ENCODE measurements at regions of chr16 and their contacts with region 1.

Region 1: DNA sequence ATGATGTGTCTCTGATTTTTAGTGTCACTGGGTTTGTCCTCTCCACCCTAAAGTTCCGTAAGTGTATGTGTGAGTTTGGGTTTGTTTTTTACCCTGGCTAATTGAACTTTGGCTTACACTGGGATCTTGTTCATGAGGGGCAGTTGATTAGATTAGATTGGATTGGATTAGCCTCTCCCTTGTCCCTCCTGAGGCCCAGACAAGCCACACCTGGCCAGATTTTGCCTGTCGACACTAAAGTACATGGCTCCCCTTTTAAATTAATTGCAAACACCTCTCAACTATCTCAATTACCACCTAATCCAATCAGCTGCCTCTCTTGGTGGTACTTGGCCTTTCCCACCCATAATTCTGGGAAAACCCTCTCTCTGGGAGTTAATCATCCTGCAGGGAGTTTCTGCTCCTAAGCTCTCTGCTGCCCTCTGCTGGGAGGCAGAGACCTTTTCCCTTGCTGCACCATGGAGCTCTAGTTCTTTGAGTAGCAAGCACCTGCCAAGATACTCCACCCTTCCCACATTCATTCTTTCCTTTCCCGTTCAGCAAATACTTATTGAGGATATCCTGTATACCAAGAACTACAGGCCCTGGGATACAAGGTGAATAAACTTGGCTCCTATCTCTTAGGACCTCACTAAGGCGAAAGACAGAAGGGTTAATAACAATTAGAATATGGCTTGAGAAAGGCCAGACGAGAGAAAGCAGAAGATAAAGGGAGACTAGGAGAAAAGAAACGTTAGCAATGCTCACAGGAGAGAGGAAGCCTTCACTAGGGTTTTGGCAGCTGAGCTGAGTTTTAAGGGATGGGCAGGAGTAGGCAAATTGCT is 60.0 kb upstream of the MPHOSPH6 start:
- DNase-seq: peak; percentile 46 to 77
- ATAC-seq: peak in 2 of 3 donors; percentile 65 to 67
- H3K4me3 ChIP-seq: no peak overlapping the region
- H3K4me3 Mint-ChIP-seq: no peak overlapping the region
- H3K27ac ChIP-seq: no peak overlapping the region
- H3K27ac Mint-ChIP-seq: no peak overlapping the region
- H3K4me1 ChIP-seq: no peaks in the 10 kb centered on the region
- H3K4me1 Mint-ChIP-seq: peaks cover 0 to 4% of the 10 kb centered on the region in 2 donors
- H3K27me3 ChIP-seq: no peaks in the 10 kb centered on the region
- H3K27me3 Mint-ChIP-seq: peaks cover 22 to 43% of the 10 kb centered on the region in 2 donors
- CTCF ChIP-seq: peak; percentile 89

Region 2: DNA sequence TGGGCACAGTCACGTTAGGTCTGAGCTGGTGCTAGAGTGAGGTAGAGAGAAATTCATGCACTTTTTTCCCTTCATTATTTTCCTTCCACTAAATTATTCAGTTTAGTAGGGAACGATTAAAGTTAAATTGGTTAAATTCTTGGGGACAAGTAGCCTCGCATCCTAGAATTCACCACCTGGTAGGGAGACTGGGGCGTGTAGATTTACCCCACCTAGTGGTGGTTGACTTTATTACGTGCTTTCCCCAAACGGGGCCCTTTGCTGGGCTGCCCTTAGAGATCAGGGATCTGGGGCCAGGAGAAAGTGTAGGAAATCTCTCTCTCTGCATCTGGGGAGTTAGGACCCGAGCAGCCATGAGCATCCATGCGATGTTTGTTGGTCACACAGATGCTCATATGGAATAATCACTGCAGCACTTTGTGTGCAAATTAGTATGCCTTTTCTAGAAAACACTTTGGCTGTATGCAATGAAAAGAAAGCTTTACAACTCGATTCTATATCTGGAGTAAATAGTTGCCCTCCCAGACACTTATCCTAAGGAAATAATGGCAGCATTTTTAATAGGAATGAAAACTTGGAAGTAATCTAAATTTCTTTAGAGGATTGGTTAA is 343.9 kb before region 1 on chr16:
- intact Hi-C with region 1: loop called (anchors 1 kb)
- DNase-seq: peak in 1 of 2 donors; percentile 52
- ATAC-seq: peak; percentile 62 to 77 (median 73)
- H3K4me3 ChIP-seq: no peak overlapping the region
- H3K4me3 Mint-ChIP-seq: no peak overlapping the region
- H3K27ac ChIP-seq: no peak overlapping the region
- H3K27ac Mint-ChIP-seq: peak overlapping the region in 1 of 2 donors; percentile 0
- H3K4me1 ChIP-seq: no peaks in the 10 kb centered on the region
- H3K4me1 Mint-ChIP-seq: peaks cover 8 to 10% of the 10 kb centered on the region in 2 donors
- H3K27me3 ChIP-seq: no peaks in the 10 kb centered on the region
- H3K27me3 Mint-ChIP-seq: no peaks in the 10 kb centered on the region
- CTCF ChIP-seq: peak; percentile 84

Region 3: GRCh38 chr16:81940781-81941560 is 289.0 kb before region 1 on chr16:
- intact Hi-C with region 1: loop called (anchors 5 kb)
- DNase-seq: peak in 1 of 2 donors; percentile 57
- ATAC-seq: no peak
- H3K4me3 ChIP-seq: no peak overlapping the region
- H3K4me3 Mint-ChIP-seq: no peak overlapping the region
- H3K27ac ChIP-seq: no peak overlapping the region
- H3K27ac Mint-ChIP-seq: peak overlapping the region; percentile 1 to 17
- H3K4me1 ChIP-seq: no peaks in the 10 kb centered on the region
- H3K4me1 Mint-ChIP-seq: peaks cover 0 to 11% of the 10 kb centered on the region in 2 donors
- H3K27me3 ChIP-seq: no peaks in the 10 kb centered on the region
- H3K27me3 Mint-ChIP-seq: no peaks in the 10 kb centered on the region
- CTCF ChIP-seq: no peak

Region 4: GRCh38 chr16:82027629-82028064 is 202.4 kb before region 1 on chr16:
- intact Hi-C with region 1: loop called (anchors 10 kb)
- DNase-seq: no peak
- ATAC-seq: no peak
- H3K4me3 ChIP-seq: no peak overlapping the region
- H3K4me3 Mint-ChIP-seq: no peak overlapping the region
- H3K27ac ChIP-seq: no peak overlapping the region
- H3K27ac Mint-ChIP-seq: no peak overlapping the region
- H3K4me1 ChIP-seq: no peaks in the 10 kb centered on the region
- H3K4me1 Mint-ChIP-seq: no peaks in the 10 kb centered on the region
- H3K27me3 ChIP-seq: peaks cover 3% of the 10 kb centered on the region
- H3K27me3 Mint-ChIP-seq: peaks cover 18 to 19% of the 10 kb centered on the region in 2 donors
- CTCF ChIP-seq: no peak

Region 5: GRCh38 chr16:82248677-82249076 is 18.7 kb after region 1 on chr16:
- intact Hi-C with region 1: no loop called
- DNase-seq: no peak
- ATAC-seq: no peak
- H3K4me3 ChIP-seq: no peak overlapping the region
- H3K4me3 Mint-ChIP-seq: no peak overlapping the region
- H3K27ac ChIP-seq: no peak overlapping the region
- H3K27ac Mint-ChIP-seq: no peak overlapping the region
- H3K4me1 ChIP-seq: no peaks in the 10 kb centered on the region
- H3K4me1 Mint-ChIP-seq: no peaks in the 10 kb centered on the region
- H3K27me3 ChIP-seq: no peaks in the 10 kb centered on the region
- H3K27me3 Mint-ChIP-seq: peaks cover 10 to 29% of the 10 kb centered on the region in 2 donors
- CTCF ChIP-seq: no peak

Region 6: DNA sequence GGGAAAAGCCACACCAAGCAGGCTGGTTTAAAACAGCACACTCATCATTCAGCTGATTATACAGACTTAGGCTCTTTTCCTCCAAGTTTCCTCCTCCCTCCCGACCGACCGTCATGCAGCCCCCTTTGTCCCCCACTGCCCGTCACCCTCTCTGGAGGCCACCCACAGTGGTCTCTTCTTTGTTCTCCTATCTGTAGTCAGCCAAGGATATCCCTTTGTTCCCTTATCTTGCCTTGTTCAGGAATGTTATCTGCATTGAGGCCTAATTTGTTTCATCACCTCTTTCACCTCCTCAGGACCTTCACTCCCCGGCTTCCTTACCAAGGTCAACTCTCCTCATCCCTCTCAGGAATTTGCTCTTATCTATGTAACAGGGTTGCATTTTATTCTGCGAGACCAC is 210.3 kb after region 1 on chr16:
- intact Hi-C with region 1: no loop called
- DNase-seq: no peak
- ATAC-seq: no peak
- H3K4me3 ChIP-seq: no peak overlapping the region
- H3K4me3 Mint-ChIP-seq: no peak overlapping the region
- H3K27ac ChIP-seq: no peak overlapping the region
- H3K27ac Mint-ChIP-seq: no peak overlapping the region
- H3K4me1 ChIP-seq: no peaks in the 10 kb centered on the region
- H3K4me1 Mint-ChIP-seq: no peaks in the 10 kb centered on the region
- H3K27me3 ChIP-seq: peaks cover 2% of the 10 kb centered on the region
- H3K27me3 Mint-ChIP-seq: peaks cover 19 to 37% of the 10 kb centered on the region in 2 donors
- CTCF ChIP-seq: no peak